MCF 10A (cell line): ENCODE measurements at regions of chr3 and their contacts with region 1.

Region 1: DNA sequence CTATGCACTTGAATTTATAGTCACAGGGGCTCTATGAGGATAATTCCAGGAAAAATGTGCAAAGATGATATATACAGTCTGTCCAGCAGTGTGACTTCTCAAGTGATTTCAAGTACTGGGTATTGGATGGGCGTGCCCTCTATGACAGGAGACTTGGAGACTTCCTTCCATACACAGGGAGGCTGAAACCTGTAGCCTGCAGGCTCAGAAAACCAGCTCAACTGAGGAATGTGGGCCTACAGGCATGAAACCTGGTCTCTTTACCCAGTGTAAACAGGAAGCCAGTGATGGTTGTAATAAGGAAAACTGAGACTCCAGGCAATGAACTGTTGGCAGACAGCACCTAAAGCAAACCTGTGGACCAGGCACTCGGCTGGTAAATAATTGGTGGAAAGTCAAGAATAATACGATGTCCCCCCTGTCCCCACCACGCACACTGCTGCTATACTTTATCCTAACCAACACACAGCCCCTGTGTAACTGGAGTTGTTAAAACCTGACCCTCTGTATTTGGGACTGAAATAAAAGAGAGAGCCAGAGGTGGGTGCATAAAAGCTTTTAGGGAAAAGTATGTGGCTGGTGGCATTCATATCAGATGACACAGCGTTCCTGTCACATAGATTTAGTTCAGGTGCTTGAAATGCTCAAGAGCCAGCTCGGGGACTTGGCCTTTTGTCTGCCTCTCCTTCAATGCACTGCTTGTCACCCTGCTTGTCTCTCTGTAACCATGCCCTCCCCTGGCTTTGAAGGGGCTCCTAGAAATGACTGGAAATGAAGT is 144.7 kb downstream of the TPRG1 start:
- DNase-seq: no peak
- H3K4me3 Mint-ChIP-seq: no peak overlapping the region
- H3K27ac Mint-ChIP-seq: peak overlapping the region; percentile 81
- H3K4me1 Mint-ChIP-seq: peaks cover 32% of the 10 kb centered on the region
- H3K27me3 Mint-ChIP-seq: no peaks in the 10 kb centered on the region
- CTCF ChIP-seq: no peak

Region 2: GRCh38 chr3:189292667-189293478 is 23.6 kb before region 1 on chr3:
- CTCF ChIA-PET with region 1: no interaction called
- POLR2A ChIA-PET with region 1: no interaction called
- intact Hi-C with region 1: no loop called
- DNase-seq: peak; percentile 88
- H3K4me3 Mint-ChIP-seq: no peak overlapping the region
- H3K27ac Mint-ChIP-seq: peak overlapping the region; percentile 88
- H3K4me1 Mint-ChIP-seq: peaks cover 37% of the 10 kb centered on the region
- H3K27me3 Mint-ChIP-seq: no peaks in the 10 kb centered on the region
- CTCF ChIP-seq: no peak

Region 3: GRCh38 chr3:189334064-189334920 is 17.9 kb after region 1 on chr3:
- CTCF ChIA-PET with region 1: interaction called, 3 read pairs
- POLR2A ChIA-PET with region 1: interaction called, 11 read pairs
- intact Hi-C with region 1: no loop called
- DNase-seq: peak; percentile 13
- H3K4me3 Mint-ChIP-seq: no peak overlapping the region
- H3K27ac Mint-ChIP-seq: no peak overlapping the region
- H3K4me1 Mint-ChIP-seq: peaks cover 4% of the 10 kb centered on the region
- H3K27me3 Mint-ChIP-seq: no peaks in the 10 kb centered on the region
- CTCF ChIP-seq: no peak